PC-9 (cell line): ENCODE measurements at regions of chr3 and their contacts with region 1.

Region 1: GRCh38 chr3:102180291-102181039 is 254.3 kb upstream of the ZPLD1 start:
- DNase-seq: no peak
- H3K4me3 ChIP-seq: no peak overlapping the region
- H3K27ac ChIP-seq: no peak overlapping the region
- H3K4me1 ChIP-seq: peaks cover 18% of the 10 kb centered on the region
- H3K27me3 ChIP-seq: no peaks in the 10 kb centered on the region
- CTCF ChIP-seq: no peak

Region 2: GRCh38 chr3:101842245-101842934 is 338.1 kb before region 1 on chr3:
- CTCF ChIA-PET with region 1: no interaction called
- POLR2A ChIA-PET with region 1: interaction called, 31 read pairs
- intact Hi-C with region 1: no loop called
- DNase-seq: no peak
- H3K4me3 ChIP-seq: no peak overlapping the region
- H3K27ac ChIP-seq: no peak overlapping the region
- H3K4me1 ChIP-seq: no peaks in the 10 kb centered on the region
- H3K27me3 ChIP-seq: no peaks in the 10 kb centered on the region
- CTCF ChIP-seq: no peak

Region 3: GRCh38 chr3:101849051-101849720 is 331.3 kb before region 1 on chr3 and contains the start of gene NFKBIZ:
- CTCF ChIA-PET with region 1: no interaction called
- POLR2A ChIA-PET with region 1: interaction called, 10 read pairs
- intact Hi-C with region 1: no loop called
- DNase-seq: peak; percentile 91 to 99
- H3K4me3 ChIP-seq: peak within 1 kb of the TSS; percentile 88
- H3K27ac ChIP-seq: peak within 1 kb of the TSS; percentile 80
- H3K4me1 ChIP-seq: peaks cover 24% of the 10 kb centered on the region
- H3K27me3 ChIP-seq: no peaks in the 10 kb centered on the region
- CTCF ChIP-seq: no peak
- total RNA-seq, gene NFKBIZ: 44.9 and 57.7 TPM in 2 replicates

Region 4: DNA sequence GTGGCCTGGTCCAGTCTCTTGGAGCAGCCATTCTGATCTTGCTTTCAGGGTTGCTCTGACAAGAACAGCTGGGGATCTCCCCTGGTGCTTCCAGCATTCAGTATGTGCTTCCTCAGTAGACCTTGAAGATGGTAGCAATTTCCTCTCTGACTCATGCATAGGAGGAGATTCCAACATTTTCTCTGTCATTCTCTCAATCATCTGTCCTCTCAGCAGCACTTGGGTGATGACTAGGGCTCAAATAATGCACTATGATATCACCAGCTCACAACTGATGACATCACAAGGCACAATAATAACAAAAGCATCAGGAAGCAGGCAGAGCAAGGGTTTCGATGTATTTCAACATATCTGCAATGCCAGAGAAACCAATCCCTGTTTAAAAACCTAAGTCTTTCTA is 278.4 kb before region 1 on chr3:
- CTCF ChIA-PET with region 1: no interaction called
- POLR2A ChIA-PET with region 1: interaction called, 13 read pairs
- intact Hi-C with region 1: no loop called
- DNase-seq: peak; percentile 34 to 86
- H3K4me3 ChIP-seq: no peak overlapping the region
- H3K27ac ChIP-seq: peak overlapping the region; percentile 48
- H3K4me1 ChIP-seq: peaks cover 6% of the 10 kb centered on the region
- H3K27me3 ChIP-seq: no peaks in the 10 kb centered on the region
- CTCF ChIP-seq: no peak

Region 5: GRCh38 chr3:102078854-102079253 is 101.6 kb before region 1 on chr3:
- CTCF ChIA-PET with region 1: no interaction called
- POLR2A ChIA-PET with region 1: interaction called, 4 read pairs
- intact Hi-C with region 1: loop called (anchors 1 kb)
- DNase-seq: peak in 1 of 2 experiments; percentile 27
- H3K4me3 ChIP-seq: 0 out of 2 replicates have a peak overlapping the region, but pooled peaks have one; percentile 3
- H3K27ac ChIP-seq: peak overlapping the region; percentile 39
- H3K4me1 ChIP-seq: peaks cover 20% of the 10 kb centered on the region
- H3K27me3 ChIP-seq: no peaks in the 10 kb centered on the region
- CTCF ChIP-seq: no peak

Region 6: GRCh38 chr3:102195198-102195948 is 14.9 kb after region 1 on chr3:
- CTCF ChIA-PET with region 1: no interaction called
- POLR2A ChIA-PET with region 1: no interaction called
- intact Hi-C with region 1: loop called (anchors 1 kb)
- DNase-seq: peak; percentile 78 to 79
- H3K4me3 ChIP-seq: peak overlapping the region; percentile 0; the same call in 1 of the 2 replicates
- H3K27ac ChIP-seq: peak overlapping the region; percentile 75
- H3K4me1 ChIP-seq: peaks cover 28% of the 10 kb centered on the region
- H3K27me3 ChIP-seq: no peaks in the 10 kb centered on the region
- CTCF ChIP-seq: no peak

Region 7: GRCh38 chr3:102471001-102471400 is 290.5 kb after region 1 on chr3:
- CTCF ChIA-PET with region 1: no interaction called
- POLR2A ChIA-PET with region 1: no interaction called
- intact Hi-C with region 1: no loop called
- DNase-seq: no peak
- H3K4me3 ChIP-seq: no peak overlapping the region
- H3K27ac ChIP-seq: no peak overlapping the region
- H3K4me1 ChIP-seq: no peaks in the 10 kb centered on the region
- H3K27me3 ChIP-seq: no peaks in the 10 kb centered on the region
- CTCF ChIP-seq: 0 out of 2 replicates have a peak, but pooled peaks have one; percentile 29

Region 8: DNA sequence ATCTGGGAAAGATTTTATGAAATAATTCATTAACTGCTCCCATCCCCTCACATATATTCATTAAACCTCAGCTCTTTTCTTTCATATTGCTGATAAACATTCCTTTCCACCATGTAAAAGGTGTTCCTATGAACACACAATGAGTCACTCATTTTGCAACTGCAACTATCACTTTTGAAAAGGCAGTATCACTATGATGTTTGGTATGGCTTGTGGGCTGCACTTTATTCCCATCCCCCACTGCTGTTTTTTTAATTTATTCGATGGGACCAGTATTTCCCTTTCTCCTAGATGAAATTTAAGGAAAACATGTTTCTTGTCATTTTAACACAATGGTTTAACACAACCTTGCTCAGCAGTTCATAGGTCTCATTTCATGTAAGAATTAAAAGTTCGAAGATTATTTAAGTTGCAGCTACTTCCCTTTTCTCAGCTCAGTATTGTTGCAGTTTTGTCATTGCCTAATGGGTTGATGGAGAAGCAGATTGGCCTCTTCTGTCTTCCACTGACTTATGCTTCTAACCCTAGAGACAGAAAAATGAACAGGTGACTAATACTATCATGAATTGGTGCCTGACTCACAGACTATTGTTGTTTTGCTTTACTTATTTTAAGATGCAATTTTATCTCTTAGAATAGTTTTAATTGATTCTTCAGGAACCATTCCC is 534.7 kb after region 1 on chr3:
- CTCF ChIA-PET with region 1: no interaction called
- POLR2A ChIA-PET with region 1: interaction called, 12 read pairs
- intact Hi-C with region 1: no loop called
- DNase-seq: peak; percentile 16 to 68
- H3K4me3 ChIP-seq: peak overlapping the region; percentile 5; the same call in 1 of the 2 replicates
- H3K27ac ChIP-seq: peak overlapping the region; percentile 59
- H3K4me1 ChIP-seq: peaks cover 12% of the 10 kb centered on the region
- H3K27me3 ChIP-seq: no peaks in the 10 kb centered on the region
- CTCF ChIP-seq: no peak